MCF 10A (cell line): ENCODE measurements at regions of chr5 and their contacts with region 1.

Region 1: DNA sequence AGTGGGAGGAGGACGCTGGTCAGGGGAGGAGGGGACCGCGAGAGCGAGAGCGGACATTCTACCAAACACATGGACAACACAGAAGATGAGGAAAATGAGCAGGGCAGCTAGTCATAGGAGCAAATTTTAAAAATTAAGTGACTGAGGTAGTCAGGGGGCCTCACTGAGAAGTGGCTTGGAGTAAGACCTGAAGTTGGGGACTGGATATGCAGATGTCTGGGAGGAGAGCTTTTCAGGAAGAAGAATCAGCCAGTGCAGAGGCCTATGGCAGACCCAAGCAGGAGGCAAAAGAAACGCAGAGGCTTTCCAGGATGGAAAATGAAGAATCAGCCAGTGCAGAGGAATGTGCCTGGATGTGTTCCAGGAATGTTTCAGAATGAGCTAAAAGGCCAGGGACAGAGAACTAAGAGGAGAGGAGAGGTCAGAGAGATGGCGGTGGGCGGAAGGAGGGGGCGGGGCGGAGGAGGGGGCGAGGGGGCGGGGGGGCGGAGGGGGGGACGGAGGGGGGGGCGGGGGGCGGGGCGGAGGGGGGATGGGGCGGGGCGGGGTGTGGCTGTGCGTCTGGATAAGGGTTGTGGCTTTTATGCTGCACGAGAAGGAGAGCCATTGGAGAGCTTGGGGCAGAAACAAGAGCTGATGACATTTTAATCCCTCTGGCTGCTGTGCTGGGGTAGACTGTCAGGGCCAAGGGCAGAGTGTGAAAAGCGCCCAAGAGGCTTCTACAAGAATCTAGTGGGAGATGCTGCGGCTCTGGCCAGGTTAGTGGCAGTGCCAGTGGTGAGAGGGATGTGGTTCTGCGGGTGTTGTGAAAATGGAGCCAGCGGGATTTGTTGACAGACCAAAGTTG is 129.6 kb downstream of the KCNIP1 start:
- DNase-seq: peak; percentile 82
- H3K4me3 Mint-ChIP-seq: peak overlapping the region; percentile 65
- H3K27ac Mint-ChIP-seq: peak overlapping the region; percentile 17
- H3K4me1 Mint-ChIP-seq: peaks cover 20% of the 10 kb centered on the region
- H3K27me3 Mint-ChIP-seq: peaks cover 15% of the 10 kb centered on the region
- CTCF ChIP-seq: no peak

Region 2: GRCh38 chr5:170426149-170426767 is 207.2 kb before region 1 on chr5:
- CTCF ChIA-PET with region 1: interaction called, 418 read pairs
- POLR2A ChIA-PET with region 1: no interaction called
- intact Hi-C with region 1: no loop called
- DNase-seq: no peak
- H3K4me3 Mint-ChIP-seq: no peak overlapping the region
- H3K27ac Mint-ChIP-seq: no peak overlapping the region
- H3K4me1 Mint-ChIP-seq: no peaks in the 10 kb centered on the region
- H3K27me3 Mint-ChIP-seq: peaks cover 60% of the 10 kb centered on the region
- CTCF ChIP-seq: no peak

Region 3: GRCh38 chr5:170451747-170452365 is 181.6 kb before region 1 on chr5:
- CTCF ChIA-PET with region 1: interaction called, 19 read pairs
- POLR2A ChIA-PET with region 1: no interaction called
- intact Hi-C with region 1: no loop called
- DNase-seq: peak; percentile 95
- H3K4me3 Mint-ChIP-seq: no peak overlapping the region
- H3K27ac Mint-ChIP-seq: no peak overlapping the region
- H3K4me1 Mint-ChIP-seq: peaks cover 9% of the 10 kb centered on the region
- H3K27me3 Mint-ChIP-seq: no peaks in the 10 kb centered on the region
- CTCF ChIP-seq: no peak

Region 4: GRCh38 chr5:170597109-170597751 is 36.2 kb before region 1 on chr5:
- CTCF ChIA-PET with region 1: interaction called, 75 read pairs
- POLR2A ChIA-PET with region 1: no interaction called
- intact Hi-C with region 1: no loop called
- DNase-seq: peak; percentile 72
- H3K4me3 Mint-ChIP-seq: peak overlapping the region; percentile 20
- H3K27ac Mint-ChIP-seq: no peak overlapping the region
- H3K4me1 Mint-ChIP-seq: peaks cover 17% of the 10 kb centered on the region
- H3K27me3 Mint-ChIP-seq: peaks cover 31% of the 10 kb centered on the region
- CTCF ChIP-seq: no peak

Region 5: DNA sequence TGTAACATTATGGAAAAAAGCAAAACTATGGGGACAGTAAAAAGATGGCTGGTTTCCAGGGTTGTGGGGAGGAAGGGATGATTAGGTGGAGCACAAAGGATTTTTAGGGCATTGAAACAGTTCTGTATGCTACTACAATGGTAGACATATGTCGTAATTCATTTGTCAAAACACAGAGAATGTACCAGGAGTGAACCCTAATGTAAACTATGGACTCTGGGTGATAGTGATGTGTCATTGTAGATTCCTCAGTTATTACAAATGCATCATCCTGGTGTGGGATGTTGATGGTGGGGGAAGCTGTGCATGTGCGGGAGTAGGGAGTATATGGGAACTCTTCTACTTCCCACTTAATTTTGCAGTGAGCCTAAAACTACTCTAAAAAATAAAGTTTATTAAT is 15.1 kb after region 1 on chr5:
- CTCF ChIA-PET with region 1: interaction called, 30 read pairs
- POLR2A ChIA-PET with region 1: interaction called, 4 read pairs
- intact Hi-C with region 1: no loop called
- DNase-seq: peak; percentile 80
- H3K4me3 Mint-ChIP-seq: no peak overlapping the region
- H3K27ac Mint-ChIP-seq: peak overlapping the region; percentile 40
- H3K4me1 Mint-ChIP-seq: peaks cover 8% of the 10 kb centered on the region
- H3K27me3 Mint-ChIP-seq: no peaks in the 10 kb centered on the region
- CTCF ChIP-seq: no peak